Natural killer cell (primary cell): ENCODE measurements at regions of chr11 and their contacts with region 1.

Region 1: DNA sequence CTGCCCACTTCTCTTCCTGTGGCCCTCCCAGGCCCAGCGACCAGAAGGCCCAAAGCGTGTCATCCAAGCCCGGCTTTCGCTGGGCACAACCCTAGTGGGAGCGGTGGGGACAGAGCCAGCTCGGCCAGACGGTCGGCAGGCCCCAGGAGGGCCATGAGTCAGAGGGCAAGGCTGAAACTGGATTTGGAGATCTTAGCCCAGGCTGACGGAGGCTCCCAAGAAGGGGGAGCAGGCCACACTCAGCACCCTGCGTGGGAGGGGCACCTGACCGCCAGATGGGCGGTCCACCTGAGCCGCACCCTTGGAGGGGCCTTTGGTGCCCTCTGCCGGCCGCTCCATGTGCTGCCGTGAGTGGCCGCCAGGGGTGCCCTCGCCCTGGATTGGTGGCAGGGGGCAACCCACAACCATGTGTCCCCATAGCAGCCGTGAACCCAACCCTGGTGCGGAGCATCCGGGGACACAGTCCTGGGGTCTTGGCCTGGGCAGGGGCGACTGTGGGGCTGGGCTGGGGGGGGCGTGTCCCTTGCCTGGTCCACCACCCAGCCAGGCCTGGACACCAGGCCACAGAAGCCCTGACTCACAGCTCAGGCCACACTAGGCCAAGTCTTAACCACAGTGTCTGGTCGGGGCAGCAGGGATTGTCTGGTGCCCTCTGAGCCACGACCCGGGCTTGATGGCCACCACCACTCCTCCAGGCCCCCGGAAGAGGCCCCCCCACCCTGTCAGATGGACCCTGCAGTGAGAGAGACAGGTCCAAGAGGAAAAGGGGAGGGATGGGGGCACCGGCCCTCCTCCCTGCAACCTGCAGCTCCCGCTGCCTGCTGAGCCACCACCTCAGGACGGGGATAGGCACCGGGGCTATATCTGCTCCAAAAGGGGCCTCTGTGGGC is 19.2 kb upstream of the TALDO1 start:
- DNase-seq: peak; percentile 76 to 88
- ATAC-seq: peak; percentile 80 to 90 (median 84)
- H3K4me3 ChIP-seq: no peak overlapping the region
- H3K4me3 Mint-ChIP-seq: no peak overlapping the region
- H3K27ac ChIP-seq: no peak overlapping the region
- H3K27ac Mint-ChIP-seq: no peak overlapping the region
- H3K4me1 ChIP-seq: peaks cover 32% of the 10 kb centered on the region
- H3K4me1 Mint-ChIP-seq: peaks cover 4 to 9% of the 10 kb centered on the region in 2 donors
- H3K27me3 ChIP-seq: no peaks in the 10 kb centered on the region
- H3K27me3 Mint-ChIP-seq: peaks cover 4 to 7% of the 10 kb centered on the region in 2 donors
- CTCF ChIP-seq: peak; percentile 97

Region 2: DNA sequence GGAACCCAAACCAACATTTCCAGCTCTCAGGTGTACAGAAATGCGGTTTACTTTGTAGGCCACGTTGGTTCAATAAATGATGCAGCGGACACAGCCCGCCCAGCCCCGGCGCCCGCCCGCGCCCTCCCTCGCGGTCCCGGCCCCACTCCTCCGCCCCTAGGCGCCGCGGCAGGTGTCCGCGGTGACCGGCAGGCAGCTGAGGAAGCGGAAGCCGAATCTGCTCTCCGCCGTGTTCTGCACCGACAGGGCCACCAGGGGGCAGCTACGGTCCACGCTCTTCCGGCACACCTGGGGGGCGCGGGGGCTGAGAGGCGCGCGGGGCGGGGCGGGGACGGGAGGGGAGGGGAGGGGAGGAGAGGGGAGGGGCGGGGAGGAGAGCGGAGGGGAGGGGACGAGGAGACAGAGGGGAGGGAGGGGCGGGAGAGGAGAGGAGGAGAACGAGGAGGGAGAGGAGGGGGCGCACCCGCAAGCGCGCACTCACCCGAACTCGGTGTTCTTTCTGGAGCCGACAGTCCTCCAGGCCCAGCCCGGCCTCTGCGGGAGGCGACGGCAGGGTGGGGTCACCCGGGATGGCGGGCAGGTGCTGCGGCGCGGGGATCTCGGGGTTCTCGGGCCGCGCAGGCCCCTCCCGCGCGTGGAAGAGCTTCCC is 173.2 kb before region 1 on chr11:
- intact Hi-C with region 1: loop called (anchors 1 kb)
- DNase-seq: peak; percentile 70 to 92
- ATAC-seq: peak; percentile 86 to 94 (median 92)
- H3K4me3 ChIP-seq: peak overlapping the region; percentile 28
- H3K4me3 Mint-ChIP-seq: peak overlapping the region; percentile 50
- H3K27ac ChIP-seq: no peak overlapping the region
- H3K27ac Mint-ChIP-seq: no peak overlapping the region
- H3K4me1 ChIP-seq: peaks cover 27% of the 10 kb centered on the region
- H3K4me1 Mint-ChIP-seq: peaks cover 3 to 8% of the 10 kb centered on the region in 2 donors
- H3K27me3 ChIP-seq: no peaks in the 10 kb centered on the region
- H3K27me3 Mint-ChIP-seq: peaks cover 0 to 5% of the 10 kb centered on the region in 2 donors
- CTCF ChIP-seq: peak; percentile 56

Region 3: GRCh38 chr11:615504-616319 is 112.4 kb before region 1 on chr11 and contains the start of gene IRF7:
- intact Hi-C with region 1: loop called (anchors 10 kb)
- DNase-seq: peak; percentile 84 to 91
- ATAC-seq: peak; percentile 80 to 92 (median 82)
- H3K4me3 ChIP-seq: peak within 1 kb of the TSS; percentile 88
- H3K4me3 Mint-ChIP-seq: peak within 1 kb of the TSS; percentile 92
- H3K27ac ChIP-seq: peak within 1 kb of the TSS; percentile 93
- H3K27ac Mint-ChIP-seq: peak within 1 kb of the TSS; percentile 89
- H3K4me1 ChIP-seq: peaks cover 39% of the 10 kb centered on the region
- H3K4me1 Mint-ChIP-seq: peaks cover 6 to 22% of the 10 kb centered on the region in 2 donors
- H3K27me3 ChIP-seq: no peaks in the 10 kb centered on the region
- H3K27me3 Mint-ChIP-seq: no peaks in the 10 kb centered on the region
- CTCF ChIP-seq: no peak
- total RNA-seq, gene IRF7: 63.3 to 97.3 (median 77.3) TPM

Region 4: DNA sequence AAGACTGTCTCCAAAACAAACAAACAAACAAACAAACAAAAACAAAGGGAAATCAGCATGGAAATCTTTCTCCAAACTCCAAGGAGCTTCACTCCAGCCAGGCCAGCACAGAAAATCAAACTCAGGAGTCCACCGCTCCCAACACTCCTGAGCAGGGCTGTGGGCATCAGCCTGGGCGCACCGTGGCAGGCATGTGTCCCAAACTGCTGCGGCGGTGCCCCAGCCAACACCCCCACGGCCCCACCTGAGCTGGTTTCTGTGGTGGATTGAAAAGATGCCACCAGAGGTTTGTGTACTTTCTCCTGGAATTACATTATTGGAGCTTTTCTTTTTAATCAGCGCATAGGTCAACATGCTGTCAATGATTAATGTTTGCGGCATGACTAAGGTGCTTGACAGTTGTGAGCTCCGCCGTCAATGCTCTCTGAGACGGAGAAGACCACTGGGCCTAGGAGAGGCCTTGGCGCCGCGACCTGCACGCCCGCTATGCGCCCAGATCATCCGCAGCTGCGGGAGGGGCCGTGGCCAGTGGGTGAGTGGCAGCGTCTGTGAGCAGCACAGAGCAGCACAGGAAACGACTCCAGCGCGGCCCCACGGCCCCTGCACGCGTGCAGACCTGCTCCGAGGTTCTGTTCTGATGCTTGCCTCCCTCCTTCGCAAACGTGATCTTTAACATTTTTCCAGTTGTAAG is 72.9 kb before region 1 on chr11:
- intact Hi-C with region 1: loop called (anchors 10 kb)
- DNase-seq: no peak
- ATAC-seq: no peak
- H3K4me3 ChIP-seq: no peak overlapping the region
- H3K4me3 Mint-ChIP-seq: no peak overlapping the region
- H3K27ac ChIP-seq: no peak overlapping the region
- H3K27ac Mint-ChIP-seq: no peak overlapping the region
- H3K4me1 ChIP-seq: no peaks in the 10 kb centered on the region
- H3K4me1 Mint-ChIP-seq: no peaks in the 10 kb centered on the region
- H3K27me3 ChIP-seq: no peaks in the 10 kb centered on the region
- H3K27me3 Mint-ChIP-seq: no peaks in the 10 kb centered on the region
- CTCF ChIP-seq: no peak

Region 5: GRCh38 chr11:695538-696248 is 32.4 kb before region 1 on chr11 and contains the start of gene TMEM80:
- intact Hi-C with region 1: loop called (anchors 2 kb)
- DNase-seq: peak; percentile 97 to 98
- ATAC-seq: peak; percentile 72 to 87 (median 74)
- H3K4me3 ChIP-seq: peak within 1 kb of the TSS; percentile 98
- H3K4me3 Mint-ChIP-seq: peak within 1 kb of the TSS; percentile 88
- H3K27ac ChIP-seq: peak within 1 kb of the TSS; percentile 100
- H3K27ac Mint-ChIP-seq: peak within 1 kb of the TSS; percentile 90 to 95
- H3K4me1 ChIP-seq: peaks cover 51% of the 10 kb centered on the region
- H3K4me1 Mint-ChIP-seq: peaks cover 18 to 41% of the 10 kb centered on the region in 2 donors
- H3K27me3 ChIP-seq: no peaks in the 10 kb centered on the region
- H3K27me3 Mint-ChIP-seq: no peaks in the 10 kb centered on the region
- CTCF ChIP-seq: no peak
- total RNA-seq, gene TMEM80: 17.8 to 42.1 (median 33.0) TPM